HAP-1 (cell line): ENCODE measurements at regions of chr9 and their contacts with region 1.

Region 1: GRCh38 chr9:2857564-2858198 is 13.8 kb upstream of the PUM3 start:
- DNase-seq: peak; percentile 74 to 83
- H3K4me3 ChIP-seq: no peak overlapping the region
- H3K4me1 ChIP-seq: no peaks in the 10 kb centered on the region
- H3K27me3 ChIP-seq: peaks cover 3% of the 10 kb centered on the region; the same call in 1 of the 2 replicates

Region 2: DNA sequence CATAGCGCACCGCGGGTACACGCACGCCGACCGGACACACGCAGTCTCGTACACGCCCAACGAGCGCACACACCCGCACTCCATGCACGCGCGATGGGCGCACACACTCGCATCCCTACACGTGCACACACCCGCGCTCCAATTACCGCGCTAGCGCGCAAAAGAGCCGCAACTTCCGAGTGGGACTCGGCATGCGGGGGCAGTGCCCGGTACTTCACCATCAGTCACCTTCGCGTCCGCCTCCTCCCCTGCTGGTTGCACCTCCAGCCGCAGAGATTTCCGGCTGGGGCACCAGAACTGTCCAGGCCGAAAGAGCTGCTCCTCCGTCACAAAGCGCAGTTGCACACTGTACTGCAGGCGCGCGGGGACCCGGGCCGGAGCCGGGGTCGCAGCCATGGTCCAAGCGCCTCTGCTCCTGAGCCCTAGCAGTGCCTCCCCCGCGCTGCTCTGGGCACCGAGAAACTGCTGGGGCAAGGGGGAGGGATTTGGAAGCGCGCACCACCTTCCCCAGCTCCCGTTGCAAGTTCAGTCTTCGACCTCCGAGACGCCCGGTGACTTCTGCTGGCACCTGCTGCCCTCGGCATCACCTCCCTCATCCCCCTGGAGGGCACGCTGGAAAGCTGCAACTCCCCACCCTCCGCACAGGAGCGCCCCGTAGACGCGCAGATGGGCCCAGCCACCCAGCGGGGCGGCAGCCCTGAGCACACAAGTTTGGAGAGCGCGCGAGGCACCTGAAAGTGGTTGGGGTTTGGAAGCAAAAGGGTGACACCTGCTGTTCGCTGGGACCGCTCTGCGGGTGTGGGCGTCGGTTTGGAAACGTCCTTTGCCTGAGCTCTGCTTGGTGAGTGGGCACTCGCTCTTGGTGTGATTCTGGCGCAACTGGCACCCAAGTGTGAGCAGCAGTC is 323.6 kb after region 1 on chr9:
- in situ Hi-C with region 1: loop called (anchors 10 kb)
- DNase-seq: peak; percentile 39 to 76
- H3K4me3 ChIP-seq: peak overlapping the region; percentile 9; the same call in 1 of the 2 replicates
- H3K4me1 ChIP-seq: no peaks in the 10 kb centered on the region
- H3K27me3 ChIP-seq: peaks cover 4% of the 10 kb centered on the region; the same call in 1 of the 2 replicates

Region 3: DNA sequence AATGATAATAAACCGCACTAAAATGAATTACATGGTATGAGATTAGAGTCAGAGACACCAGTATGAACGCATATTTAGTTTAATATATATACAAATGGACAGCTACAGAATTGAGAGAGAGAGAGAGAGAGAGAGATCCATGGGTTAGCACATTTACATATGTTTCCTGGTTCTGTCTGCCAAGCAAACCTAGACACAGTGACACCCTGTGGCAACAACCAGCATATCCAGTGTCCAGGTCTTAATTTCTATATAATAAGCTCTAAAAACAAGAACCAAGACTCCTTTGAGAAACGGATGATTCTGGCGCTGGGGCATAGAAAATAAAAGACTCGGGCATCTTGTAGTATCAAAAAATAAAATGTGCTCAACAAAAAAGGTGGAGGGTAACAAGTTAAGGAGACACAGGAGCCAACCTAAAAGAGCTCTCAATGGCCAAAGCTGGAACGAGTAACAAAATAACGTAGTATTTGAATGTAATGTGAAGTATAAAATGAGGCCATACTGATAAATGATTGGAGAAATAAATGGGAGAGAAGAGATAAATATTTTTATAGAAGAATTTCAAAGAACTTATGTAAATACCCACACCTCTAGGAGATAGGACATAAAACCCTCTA is 583.6 kb after region 1 on chr9:
- in situ Hi-C with region 1: loop called (anchors 25 kb)
- DNase-seq: peak; percentile 61 to 65
- H3K4me3 ChIP-seq: no peak overlapping the region
- H3K4me1 ChIP-seq: no peaks in the 10 kb centered on the region
- H3K27me3 ChIP-seq: no peaks in the 10 kb centered on the region

Region 4: GRCh38 chr9:4375424-4376200 is 1517.9 kb after region 1 on chr9:
- in situ Hi-C with region 1: loop called (anchors 10 kb)
- DNase-seq: peak in 1 of 2 experiments; percentile 53
- H3K4me3 ChIP-seq: no peak overlapping the region
- H3K4me1 ChIP-seq: no peaks in the 10 kb centered on the region
- H3K27me3 ChIP-seq: no peaks in the 10 kb centered on the region